Vagina (tissue), 2 donors: ENCODE measurements at regions of chr1 and their contacts with region 1.

Region 1: DNA sequence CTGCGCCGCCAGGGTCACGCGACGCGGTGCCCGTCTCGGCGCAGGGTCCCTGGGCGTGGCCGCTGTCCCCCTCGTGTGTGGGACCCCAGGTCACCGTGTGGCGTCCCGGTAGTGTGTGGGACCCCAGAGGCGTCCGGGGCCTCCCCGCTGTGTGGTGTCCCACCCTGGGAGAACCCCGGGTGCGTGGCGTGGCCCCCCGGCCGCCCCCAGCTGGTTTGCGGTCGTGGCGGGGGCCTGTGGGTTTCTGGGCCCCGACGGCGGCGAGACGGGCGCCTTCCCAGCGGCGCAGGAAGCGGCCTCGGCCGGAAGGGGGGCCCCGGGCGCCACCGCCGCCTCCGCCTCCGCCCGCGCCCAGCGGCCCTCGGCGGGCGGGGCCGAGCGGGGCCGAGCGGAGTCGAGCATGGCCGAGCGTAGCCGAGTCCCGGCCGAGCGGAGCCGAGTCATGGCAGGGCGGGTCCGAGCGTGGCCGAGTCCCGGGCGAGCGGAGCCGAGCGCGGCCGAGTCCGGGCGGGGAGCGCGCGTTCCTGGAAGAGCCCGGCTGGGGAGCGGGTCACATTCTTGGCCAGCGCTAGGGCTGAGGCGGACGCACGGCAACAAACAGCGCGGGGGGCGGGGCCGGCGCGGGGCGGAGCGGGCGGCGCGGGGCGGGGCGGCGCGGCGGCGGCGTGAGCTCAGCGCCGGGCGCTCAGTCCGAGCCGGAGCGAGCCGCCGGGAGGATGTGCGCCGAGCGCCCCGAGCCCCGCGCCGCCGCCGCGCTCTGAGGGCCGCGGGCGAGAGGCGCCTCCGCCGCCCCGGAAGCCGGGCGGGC is 569 bp upstream of the SKI start:
- DNase-seq: peak in 1 of 2 donors; percentile 94
- H3K4me3 ChIP-seq: peak overlapping the region; percentile 73 to 95
- H3K27ac ChIP-seq: peak overlapping the region; percentile 98
- H3K4me1 ChIP-seq: peaks cover 40% of the 10 kb centered on the region
- H3K27me3 ChIP-seq: no peaks in the 10 kb centered on the region
- CTCF ChIP-seq: no peak
- POLR2A ChIP-seq: peak in 1 of 2 donors; percentile 88

Region 2: GRCh38 chr1:2212542-2213491 is 14.7 kb before region 1 on chr1:
- intact Hi-C with region 1: loop called (anchors 2 kb)
- DNase-seq: no peak
- H3K4me3 ChIP-seq: peak overlapping the region; percentile 18 to 29
- H3K27ac ChIP-seq: peak overlapping the region; percentile 97
- H3K4me1 ChIP-seq: peaks cover 68% of the 10 kb centered on the region
- H3K27me3 ChIP-seq: no peaks in the 10 kb centered on the region
- CTCF ChIP-seq: peak in 2 of 3 experiments; percentile 18 to 28
- POLR2A ChIP-seq: peak in 1 of 2 donors; percentile 37

Region 3: DNA sequence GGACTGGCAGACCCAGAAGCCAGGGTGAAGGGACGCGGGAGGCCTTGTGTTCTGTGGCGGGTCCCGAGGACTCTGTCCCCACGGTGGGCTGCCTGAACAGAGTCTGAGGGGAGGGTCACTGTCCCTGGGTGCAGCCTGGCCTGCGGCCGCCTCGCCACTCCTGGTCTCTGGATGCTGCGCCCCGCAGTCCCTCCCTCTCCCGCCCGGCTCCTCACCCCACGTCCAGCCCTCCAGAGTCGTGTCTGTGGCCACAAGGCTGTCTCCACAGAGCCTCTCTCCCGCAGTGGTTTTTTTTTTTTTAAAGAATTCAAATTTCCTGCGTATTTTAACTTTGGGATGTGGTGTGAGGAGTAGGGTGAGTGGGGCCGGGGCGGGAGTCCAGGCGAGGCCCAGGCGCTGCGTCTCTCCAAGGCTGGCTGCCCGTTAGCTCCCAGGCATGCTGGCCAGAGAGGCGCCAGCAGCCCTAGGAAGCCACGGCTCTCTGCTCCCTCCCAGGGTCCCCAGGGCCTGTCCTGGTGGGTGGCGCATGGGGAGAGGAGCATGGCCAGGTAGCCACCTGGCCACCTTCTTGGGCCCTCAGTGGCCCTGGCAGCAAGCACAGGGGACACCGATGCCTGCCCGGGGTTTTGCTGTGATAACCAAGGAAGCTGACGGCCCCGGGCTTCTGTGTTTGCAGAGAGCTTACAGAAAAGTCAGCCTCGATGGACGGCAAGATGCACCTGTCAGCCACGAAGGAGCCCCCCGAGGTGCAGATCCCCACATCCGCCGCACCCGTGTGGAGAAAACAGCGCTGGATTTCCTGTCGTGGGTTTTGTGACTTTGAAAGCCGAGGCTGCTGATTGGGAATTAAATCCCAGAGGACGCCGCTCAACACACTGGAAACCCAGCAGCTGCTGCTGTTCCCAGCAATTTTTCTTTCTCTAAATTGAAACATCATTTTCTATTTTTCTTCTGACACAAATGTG is 91.0 kb after region 1 on chr1:
- intact Hi-C with region 1: loop called (anchors 1 kb)
- DNase-seq: no peak
- H3K4me3 ChIP-seq: no peak overlapping the region
- H3K27ac ChIP-seq: peak overlapping the region; percentile 16
- H3K4me1 ChIP-seq: peaks cover 67% of the 10 kb centered on the region
- H3K27me3 ChIP-seq: no peaks in the 10 kb centered on the region
- CTCF ChIP-seq: no peak
- POLR2A ChIP-seq: no peak